Activated CD4-positive, alpha-beta T cell treated with anti-CD3 and anti-CD28 coated beads for 36 hours (primary cell): ENCODE measurements at regions of chr2 and their contacts with region 1.

Region 1: GRCh38 chr2:200703127-200703925 is 108.4 kb upstream of the BZW1 start:
- DNase-seq: peak; percentile 61
- ATAC-seq: peak; percentile 85
- H3K4me3 Mint-ChIP-seq: peak overlapping the region; percentile 37
- H3K27ac Mint-ChIP-seq: peak overlapping the region; percentile 88
- H3K4me1 Mint-ChIP-seq: peaks cover 62% of the 10 kb centered on the region
- H3K27me3 Mint-ChIP-seq: peaks cover 1% of the 10 kb centered on the region

Region 2: GRCh38 chr2:200454927-200455801 is 248.2 kb before region 1 on chr2:
- CTCF ChIA-PET with region 1: no interaction called
- POLR2A ChIA-PET with region 1: no interaction called
- intact Hi-C with region 1: loop called in 1 of 2 experiments (anchors 5 kb)
- DNase-seq: peak; percentile 41
- ATAC-seq: peak; percentile 78
- H3K4me3 Mint-ChIP-seq: peak overlapping the region; percentile 10
- H3K27ac Mint-ChIP-seq: peak overlapping the region; percentile 96
- H3K4me1 Mint-ChIP-seq: peaks cover 33% of the 10 kb centered on the region
- H3K27me3 Mint-ChIP-seq: no peaks in the 10 kb centered on the region

Region 3: DNA sequence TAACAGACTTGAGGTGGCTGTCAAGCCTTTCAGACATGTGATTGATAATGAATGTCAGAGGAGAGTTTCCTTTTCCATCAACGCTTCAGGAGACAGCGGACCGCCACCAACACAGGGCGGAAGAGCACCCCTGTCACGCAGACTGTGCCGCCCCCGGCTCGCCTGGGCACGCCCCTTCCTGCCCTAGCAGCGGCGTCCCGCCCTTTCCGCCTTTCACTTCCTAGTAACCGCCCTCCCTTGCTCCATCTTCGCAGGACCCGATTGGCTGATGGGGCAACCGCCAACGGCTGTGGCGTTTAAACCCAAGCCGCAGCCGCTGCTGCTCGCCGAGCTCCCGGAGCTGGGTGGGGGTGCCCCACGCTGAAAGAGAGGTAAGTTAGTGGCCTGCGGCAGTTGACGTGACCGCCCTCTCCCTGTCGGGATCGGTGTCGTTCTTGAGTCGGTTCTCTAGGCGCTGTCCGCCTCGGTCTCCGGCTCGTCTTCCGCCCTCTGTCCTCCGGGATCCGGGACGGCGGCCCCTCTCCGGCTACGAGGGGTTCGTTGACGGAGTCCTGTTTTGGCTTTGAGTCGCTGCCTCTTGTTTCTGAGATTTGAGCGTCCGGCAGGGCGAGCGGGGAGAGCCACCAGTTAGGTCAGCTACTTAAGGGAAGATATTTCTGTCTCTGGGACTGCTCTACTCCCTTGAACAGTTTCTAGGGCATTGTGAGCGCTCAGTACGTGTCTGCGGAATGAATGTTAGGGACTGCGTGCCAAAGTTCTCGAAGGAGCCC is 177.3 kb before region 1 on chr2 and contains the start of gene SGO2:
- CTCF ChIA-PET with region 1: no interaction called
- POLR2A ChIA-PET with region 1: no interaction called
- intact Hi-C with region 1: loop called in 1 of 2 experiments (anchors 5 kb)
- DNase-seq: peak; percentile 98
- ATAC-seq: peak; percentile 99
- H3K4me3 Mint-ChIP-seq: peak within 1 kb of the TSS; percentile 97
- H3K27ac Mint-ChIP-seq: peak within 1 kb of the TSS; percentile 90
- H3K4me1 Mint-ChIP-seq: peaks cover 23% of the 10 kb centered on the region
- H3K27me3 Mint-ChIP-seq: no peaks in the 10 kb centered on the region
- total RNA-seq, gene SGO2: 49.9 to 56.7 TPM

Region 4: GRCh38 chr2:200613692-200614091 is 89.6 kb before region 1 on chr2:
- CTCF ChIA-PET with region 1: interaction called, 6 read pairs
- POLR2A ChIA-PET with region 1: no interaction called
- intact Hi-C with region 1: loop called in 1 of 2 experiments (anchors 5 kb)
- DNase-seq: no peak
- ATAC-seq: no peak
- H3K4me3 Mint-ChIP-seq: no peak overlapping the region
- H3K27ac Mint-ChIP-seq: no peak overlapping the region
- H3K4me1 Mint-ChIP-seq: peaks cover 16% of the 10 kb centered on the region
- H3K27me3 Mint-ChIP-seq: peaks cover 10% of the 10 kb centered on the region

Region 5: GRCh38 chr2:200888704-200889625 is 185.6 kb after region 1 on chr2 and contains the starts of genes NIF3L1 and PPIL3:
- CTCF ChIA-PET with region 1: no interaction called
- POLR2A ChIA-PET with region 1: interaction called, 5 read pairs
- intact Hi-C with region 1: loop called in 1 of 2 experiments (anchors 2 kb)
- DNase-seq: peak; percentile 99
- ATAC-seq: peak; percentile 83
- H3K4me3 Mint-ChIP-seq: peak within 1 kb of the TSS; percentile 98
- H3K27ac Mint-ChIP-seq: peak within 1 kb of the TSS; percentile 100
- H3K4me1 Mint-ChIP-seq: peaks cover 46% of the 10 kb centered on the region
- H3K27me3 Mint-ChIP-seq: no peaks in the 10 kb centered on the region
- total RNA-seq, gene NIF3L1: 37.0 to 47.7 TPM
- total RNA-seq, gene PPIL3: 52.6 to 53.0 TPM